CD14-positive monocyte (primary cell): ENCODE measurements at regions of chr1 and their contacts with region 1.

Region 1: DNA sequence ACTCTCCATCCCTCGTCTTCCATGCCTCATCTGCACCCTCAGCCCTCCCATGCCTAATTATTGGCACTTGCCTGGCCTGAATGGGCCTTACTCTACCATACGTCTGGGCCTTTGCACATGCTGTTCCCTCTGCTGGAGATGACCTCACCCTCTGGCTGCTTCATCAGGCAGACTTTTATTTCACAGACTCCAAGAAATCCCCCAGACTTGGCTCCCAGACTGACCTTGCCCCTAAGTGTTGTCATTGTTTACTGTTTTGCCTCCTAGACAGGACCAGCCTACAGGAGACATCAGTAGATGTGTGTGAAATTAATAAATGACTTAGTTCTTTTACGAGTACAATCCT is 5.2 kb upstream of the AHDC1 start:
- DNase-seq: peak; percentile 61 to 84 (median 63)
- H3K4me3 ChIP-seq: no peak overlapping the region
- H3K4me3 Mint-ChIP-seq: no peak overlapping the region
- H3K27ac ChIP-seq: peak overlapping the region; percentile 18 to 72
- H3K27ac Mint-ChIP-seq: no peak overlapping the region
- H3K4me1 ChIP-seq: peaks cover 36 to 63% of the 10 kb centered on the region in 2 donors
- H3K4me1 Mint-ChIP-seq: peaks cover 29% of the 10 kb centered on the region
- H3K27me3 ChIP-seq: no peaks in the 10 kb centered on the region
- H3K27me3 Mint-ChIP-seq: peaks cover 0 to 3% (median 2%) of the 10 kb centered on the region in 3 donors
- CTCF ChIP-seq: no peak

Region 2: DNA sequence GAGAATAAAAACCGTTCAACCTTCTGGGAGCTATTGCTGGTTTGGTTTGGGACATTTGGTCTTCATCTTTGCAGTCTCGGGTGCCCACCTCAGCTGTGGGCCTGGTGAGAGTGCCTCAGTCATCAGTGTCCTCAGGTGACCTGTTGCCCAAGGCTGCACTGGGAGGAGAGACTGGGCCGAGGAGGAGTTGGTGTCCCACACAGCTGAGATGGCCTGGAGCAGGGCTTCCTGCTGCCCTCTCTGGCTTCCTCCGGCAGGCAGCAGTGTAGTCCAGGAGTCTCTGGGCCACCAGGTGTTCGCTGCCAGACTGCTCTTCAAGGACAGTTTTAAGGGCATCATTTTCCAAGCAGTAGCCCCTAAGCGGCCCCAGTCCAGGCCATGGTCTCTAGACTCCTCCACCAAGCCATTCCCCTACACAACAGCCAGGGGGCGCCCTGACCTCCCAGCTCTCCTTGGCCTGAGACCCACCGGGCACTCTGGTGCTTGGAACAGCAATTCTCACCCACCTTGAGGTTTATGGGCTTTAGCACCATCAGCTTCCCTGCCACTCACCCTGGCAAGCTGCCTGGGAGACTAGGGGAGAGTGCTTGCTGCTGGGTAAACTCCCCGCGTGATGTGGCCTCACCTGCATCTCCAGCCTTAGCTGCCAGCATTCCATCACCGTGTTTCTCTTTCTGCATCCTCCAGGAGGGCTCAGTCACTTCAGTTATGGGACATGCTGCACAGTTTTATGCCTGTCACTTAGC is 276.5 kb before region 1 on chr1:
- intact Hi-C with region 1: no loop called
- DNase-seq: peak in 2 of 3 donors; percentile 38 to 49
- H3K4me3 ChIP-seq: no peak overlapping the region
- H3K4me3 Mint-ChIP-seq: no peak overlapping the region
- H3K27ac ChIP-seq: peak overlapping the region in 1 of 2 donors; percentile 48
- H3K27ac Mint-ChIP-seq: peak overlapping the region in 1 of 7 donors; percentile 66
- H3K4me1 ChIP-seq: peaks cover 4 to 6% of the 10 kb centered on the region in 2 donors
- H3K4me1 Mint-ChIP-seq: peaks cover 7% of the 10 kb centered on the region
- H3K27me3 ChIP-seq: no peaks in the 10 kb centered on the region
- H3K27me3 Mint-ChIP-seq: peaks cover 0 to 3% (median 2%) of the 10 kb centered on the region in 3 donors
- CTCF ChIP-seq: peak; percentile 93

Region 3: GRCh38 chr1:27416387-27417111 is 192.6 kb before region 1 on chr1:
- intact Hi-C with region 1: loop called (anchors 2 to 10 kb)
- DNase-seq: peak; percentile 57 to 67 (median 58)
- H3K4me3 ChIP-seq: no peak overlapping the region
- H3K4me3 Mint-ChIP-seq: no peak overlapping the region
- H3K27ac ChIP-seq: peak overlapping the region in 1 of 2 donors; percentile 24
- H3K27ac Mint-ChIP-seq: peak overlapping the region in 4 of 7 donors; percentile 2 to 56 (median 35)
- H3K4me1 ChIP-seq: peaks cover 6 to 12% of the 10 kb centered on the region in 2 donors
- H3K4me1 Mint-ChIP-seq: peaks cover 17% of the 10 kb centered on the region
- H3K27me3 ChIP-seq: no peaks in the 10 kb centered on the region
- H3K27me3 Mint-ChIP-seq: no peaks in the 10 kb centered on the region
- CTCF ChIP-seq: peak; percentile 70

Region 4: DNA sequence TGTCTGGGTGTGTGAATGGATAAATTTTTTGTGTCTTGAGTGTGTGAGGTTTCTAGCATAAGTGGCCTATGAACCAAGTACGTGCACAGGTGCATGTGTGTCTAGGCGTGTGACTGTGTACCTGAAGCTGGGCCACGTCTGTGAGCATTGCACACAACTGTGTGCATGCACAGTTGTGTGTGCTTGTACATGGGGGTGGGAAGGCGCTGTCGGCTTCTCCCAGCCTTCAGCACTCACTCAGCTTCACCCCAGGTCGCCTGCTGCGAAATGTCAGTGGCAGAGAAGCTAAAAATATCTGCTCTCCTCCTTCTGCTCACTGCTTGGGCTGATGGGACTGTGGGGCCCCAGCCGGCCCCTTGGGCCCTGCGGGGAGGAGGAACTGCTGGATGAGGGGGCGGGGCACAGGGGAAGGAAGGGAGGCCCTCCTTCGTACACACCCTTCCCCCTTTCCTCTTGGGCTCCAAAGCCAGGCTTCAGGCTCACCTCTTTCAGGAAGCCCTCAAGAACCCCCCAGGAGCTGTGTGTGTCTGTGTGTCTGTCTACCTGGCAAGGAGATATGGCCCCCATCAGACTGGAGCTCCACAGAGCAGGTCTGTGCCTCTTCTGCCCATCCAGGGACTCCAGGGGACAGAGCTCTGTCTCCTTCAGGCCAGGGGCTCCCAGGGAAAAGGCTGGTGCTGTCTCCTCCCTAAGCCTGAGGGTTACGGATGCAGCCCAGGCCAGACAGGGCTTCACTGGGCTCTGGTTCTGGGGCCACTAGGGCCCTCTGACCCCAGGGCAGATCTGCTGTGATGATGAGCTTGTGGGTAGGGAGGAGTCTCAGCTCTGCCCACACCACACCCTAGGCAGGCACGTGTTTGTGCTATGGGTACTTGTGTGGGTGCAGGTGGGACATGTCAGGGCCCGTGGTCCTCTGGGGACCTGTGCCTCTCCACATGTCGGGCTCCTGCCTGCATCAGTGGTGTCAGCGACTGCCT is 83.6 kb before region 1 on chr1:
- intact Hi-C with region 1: no loop called
- DNase-seq: peak; percentile 55 to 65 (median 62)
- H3K4me3 ChIP-seq: peak overlapping the region; percentile 28 to 80 (median 34)
- H3K4me3 Mint-ChIP-seq: peak overlapping the region; percentile 72 to 85
- H3K27ac ChIP-seq: peak overlapping the region; percentile 67 to 86
- H3K27ac Mint-ChIP-seq: peak overlapping the region; percentile 85 to 91 (median 86)
- H3K4me1 ChIP-seq: peaks cover 80 to 87% of the 10 kb centered on the region in 2 donors
- H3K4me1 Mint-ChIP-seq: peaks cover 83% of the 10 kb centered on the region
- H3K27me3 ChIP-seq: peaks cover 0 to 8% of the 10 kb centered on the region in 2 donors
- H3K27me3 Mint-ChIP-seq: peaks cover 16 to 22% (median 19%) of the 10 kb centered on the region in 3 donors
- CTCF ChIP-seq: no peak